Gastrocnemius medialis (tissue), 4 donors: ENCODE measurements at regions of chr17 and their contacts with region 1.

Region 1: GRCh38 chr17:42720996-42721583 is 23.8 kb downstream of the EZH1 start:
- DNase-seq: no peak
- ATAC-seq: peak; percentile 52 to 69
- H3K4me3 ChIP-seq: no peak overlapping the region
- H3K27ac ChIP-seq: no peak overlapping the region
- H3K4me1 ChIP-seq: no peaks in the 10 kb centered on the region
- H3K27me3 ChIP-seq: no peaks in the 10 kb centered on the region
- CTCF ChIP-seq: peak; percentile 48 to 67 (median 56)
- POLR2A ChIP-seq: no peak

Region 2: DNA sequence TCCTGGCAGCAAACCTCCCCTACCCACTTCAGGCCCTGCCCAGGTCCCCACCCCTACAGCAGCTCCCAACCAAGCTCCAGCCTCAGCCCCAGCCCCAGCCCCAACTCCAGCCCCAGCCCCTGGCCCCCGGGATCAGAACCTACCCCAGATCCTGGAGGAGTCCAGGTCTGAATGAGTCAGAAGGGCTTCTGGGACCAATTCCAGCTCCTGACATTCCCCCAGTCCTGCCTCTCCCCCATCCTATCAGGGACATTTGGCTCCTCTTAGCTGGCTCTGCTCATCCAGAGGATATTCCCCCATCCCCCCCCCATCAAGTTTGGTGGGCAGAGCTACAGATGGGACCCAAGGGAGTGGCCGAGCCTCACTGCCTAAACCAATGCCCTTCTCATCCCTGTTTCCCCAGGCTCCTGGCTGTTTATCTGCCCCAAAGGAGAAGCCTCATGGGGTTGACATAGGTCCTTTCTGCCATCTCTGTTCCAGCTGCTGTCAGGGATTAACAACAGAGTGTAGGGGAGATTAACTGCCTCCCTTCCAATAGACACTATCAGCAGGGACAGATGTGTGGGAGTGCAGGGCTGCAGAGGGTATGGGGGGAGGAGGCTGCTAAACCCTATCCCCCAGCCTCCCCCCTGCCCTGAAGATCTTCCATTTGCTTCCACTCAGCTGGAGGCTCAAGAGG is 22.2 kb before region 1 on chr17:
- in situ Hi-C with region 1: no loop called
- intact Hi-C with region 1: no loop called
- DNase-seq: no peak
- ATAC-seq: no peak
- H3K4me3 ChIP-seq: no peak overlapping the region
- H3K27ac ChIP-seq: no peak overlapping the region
- H3K4me1 ChIP-seq: no peaks in the 10 kb centered on the region
- H3K27me3 ChIP-seq: no peaks in the 10 kb centered on the region
- CTCF ChIP-seq: no peak
- POLR2A ChIP-seq: no peak

Region 3: DNA sequence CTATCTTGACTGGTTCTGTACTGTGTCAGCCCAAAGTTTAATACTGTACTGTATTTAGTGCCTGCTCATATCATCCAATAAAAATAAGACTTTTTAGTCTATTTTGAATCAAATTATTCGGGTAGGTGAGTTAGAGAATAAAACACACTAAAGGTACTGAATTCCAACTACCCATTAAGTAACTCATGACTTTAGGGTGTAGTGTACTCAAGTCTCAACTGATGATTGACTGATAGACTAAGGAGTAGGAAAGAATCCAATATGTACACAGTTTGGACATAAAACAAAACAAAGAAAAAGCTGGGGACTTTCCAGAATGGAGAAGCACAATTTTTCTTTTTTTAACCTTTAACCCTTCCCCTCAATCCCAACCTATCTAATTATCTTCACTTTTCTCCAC is 19.6 kb after region 1 on chr17:
- in situ Hi-C with region 1: no loop called
- intact Hi-C with region 1: no loop called
- DNase-seq: no peak
- ATAC-seq: no peak
- H3K4me3 ChIP-seq: no peak overlapping the region
- H3K27ac ChIP-seq: no peak overlapping the region
- H3K4me1 ChIP-seq: peaks cover 29 to 32% of the 10 kb centered on the region in 2 donors
- H3K27me3 ChIP-seq: no peaks in the 10 kb centered on the region
- CTCF ChIP-seq: no peak
- POLR2A ChIP-seq: no peak

Region 4: DNA sequence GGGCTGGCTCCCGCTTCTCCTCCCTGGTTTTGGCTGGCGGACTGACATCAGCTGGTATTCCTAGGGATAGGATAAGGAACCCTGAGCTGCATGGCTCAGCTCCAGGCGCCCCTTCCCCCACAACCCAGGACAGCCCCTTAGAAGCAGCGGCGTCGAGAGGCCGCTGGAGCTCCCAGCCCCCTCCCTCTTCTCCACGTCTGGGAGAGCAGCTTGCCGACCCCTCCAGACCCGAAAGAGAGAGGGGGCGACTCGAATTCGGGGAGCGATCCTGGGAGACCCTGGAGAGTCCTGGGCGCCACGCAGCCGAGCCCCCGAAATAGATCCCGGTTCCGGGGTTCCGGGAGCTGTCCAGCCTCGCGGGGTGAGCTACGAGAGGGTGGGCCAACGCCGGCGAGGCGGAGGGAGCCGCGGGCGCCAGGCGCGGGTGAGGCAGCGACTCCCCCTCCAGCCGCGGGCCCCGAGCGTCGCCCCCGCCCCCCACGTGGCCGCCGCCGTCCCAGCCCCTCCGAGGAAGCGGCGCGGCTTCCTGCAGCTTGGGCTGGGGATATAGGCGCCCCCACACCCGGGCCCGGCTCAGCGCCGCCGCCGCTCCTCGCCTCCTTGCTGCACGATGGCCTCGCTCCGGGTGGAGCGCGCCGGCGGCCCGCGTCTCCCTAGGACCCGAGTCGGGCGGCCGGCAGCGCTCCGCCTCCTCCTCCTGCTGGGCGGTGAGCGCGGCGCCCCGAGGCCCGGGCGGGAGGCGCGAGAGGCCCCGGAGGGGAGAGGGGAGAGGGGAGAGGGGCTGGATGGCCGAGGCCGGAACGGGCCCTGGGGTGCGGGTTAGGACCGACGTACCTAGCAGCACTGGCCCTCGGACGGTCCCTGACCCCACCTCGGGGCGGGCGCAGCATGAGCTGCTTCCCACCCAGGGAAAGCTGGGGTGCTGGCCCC is 39.8 kb after region 1 on chr17 and contains the start of gene RAMP2:
- in situ Hi-C with region 1: loop called in 2 of 4 experiments (anchors 5 kb)
- intact Hi-C with region 1: loop called (anchors 1 kb)
- DNase-seq: no peak
- ATAC-seq: peak in 1 of 2 donors; percentile 24
- H3K4me3 ChIP-seq: peak within 1 kb of the TSS; percentile 50 to 66 (median 58)
- H3K27ac ChIP-seq: peak within 1 kb of the TSS; percentile 67 to 78 (median 74)
- H3K4me1 ChIP-seq: peaks cover 3 to 13% of the 10 kb centered on the region in 2 donors
- H3K27me3 ChIP-seq: peaks cover 4 to 26% (median 15%) of the 10 kb centered on the region in 3 donors
- CTCF ChIP-seq: no peak
- POLR2A ChIP-seq: peak in 1 of 2 donors; percentile 41
- total RNA-seq, gene RAMP2: 17.5 to 31.2 (median 20.7) TPM

Region 5: GRCh38 chr17:42773290-42774035 is 52.4 kb after region 1 on chr17 and contains the start of gene VPS25:
- in situ Hi-C with region 1: no loop called
- intact Hi-C with region 1: no loop called
- DNase-seq: peak; percentile 62 to 74
- ATAC-seq: peak; percentile 96 to 99
- H3K4me3 ChIP-seq: peak within 1 kb of the TSS; percentile 85 to 100 (median 91)
- H3K27ac ChIP-seq: peak within 1 kb of the TSS; percentile 81 to 94 (median 88)
- H3K4me1 ChIP-seq: peaks cover 12 to 17% of the 10 kb centered on the region in 2 donors
- H3K27me3 ChIP-seq: no peaks in the 10 kb centered on the region
- CTCF ChIP-seq: peak in 1 of 5 experiments; percentile 24
- POLR2A ChIP-seq: peak in 1 of 2 donors; percentile 47
- total RNA-seq, gene VPS25: 44.8 to 54.6 (median 53.5) TPM

Region 6: DNA sequence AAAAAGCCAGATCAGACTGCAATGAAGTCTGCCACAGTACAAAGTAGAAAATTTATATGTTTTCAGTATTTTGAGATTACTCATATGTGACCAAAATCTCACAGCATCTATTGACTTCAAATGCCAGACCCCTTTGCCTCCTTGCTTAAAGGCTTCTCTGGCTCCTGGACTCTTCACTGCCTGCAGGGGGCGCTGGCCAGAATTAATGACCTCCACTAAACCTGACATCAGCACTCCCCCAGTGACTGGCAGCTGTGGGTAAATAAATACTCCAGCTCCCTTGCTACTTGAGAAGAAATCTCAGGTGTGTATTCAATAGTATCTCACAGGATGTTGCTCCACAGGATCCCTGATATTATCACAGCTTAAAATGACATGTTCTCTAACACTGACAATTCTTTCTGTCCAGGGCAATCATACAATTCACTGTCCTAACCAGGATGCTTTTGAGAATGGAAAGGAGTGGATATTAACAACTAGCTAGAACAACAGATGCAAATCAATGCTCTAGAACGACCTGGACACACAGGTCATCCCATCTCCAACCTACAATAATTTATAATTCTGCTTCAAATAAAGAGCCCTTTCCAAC is 99.0 kb after region 1 on chr17:
- in situ Hi-C with region 1: loop called in 1 of 4 experiments (anchors 10 kb)
- intact Hi-C with region 1: loop called (anchors 2 kb)
- DNase-seq: peak in 1 of 2 donors; percentile 33
- ATAC-seq: no peak
- H3K4me3 ChIP-seq: no peak overlapping the region
- H3K27ac ChIP-seq: no peak overlapping the region
- H3K4me1 ChIP-seq: peaks cover 13 to 14% of the 10 kb centered on the region in 2 donors
- H3K27me3 ChIP-seq: no peaks in the 10 kb centered on the region
- CTCF ChIP-seq: peak in 3 of 5 experiments; percentile 41 to 61 (median 42)
- POLR2A ChIP-seq: no peak

Region 7: GRCh38 chr17:42928714-42929496 is 207.8 kb after region 1 on chr17:
- in situ Hi-C with region 1: loop called in 1 of 4 experiments (anchors 25 kb)
- intact Hi-C with region 1: no loop called
- DNase-seq: peak; percentile 5 to 19
- ATAC-seq: peak; percentile 92 to 93
- H3K4me3 ChIP-seq: no peak overlapping the region
- H3K27ac ChIP-seq: peak overlapping the region; percentile 17 to 71 (median 52)
- H3K4me1 ChIP-seq: peaks cover 0 to 6% of the 10 kb centered on the region in 2 donors
- H3K27me3 ChIP-seq: peaks cover 0 to 4% (median 0%) of the 10 kb centered on the region in 3 donors
- CTCF ChIP-seq: peak in 4 of 5 experiments; percentile 46 to 62 (median 56)
- POLR2A ChIP-seq: no peak

Region 8: GRCh38 chr17:43175816-43176570 is 454.9 kb after region 1 on chr17:
- in situ Hi-C with region 1: loop called in 1 of 4 experiments (anchors 25 kb)
- intact Hi-C with region 1: no loop called
- DNase-seq: no peak
- ATAC-seq: no peak
- H3K4me3 ChIP-seq: no peak overlapping the region
- H3K27ac ChIP-seq: peak overlapping the region; percentile 3 to 25 (median 14)
- H3K4me1 ChIP-seq: peaks cover 42 to 47% of the 10 kb centered on the region in 2 donors
- H3K27me3 ChIP-seq: no peaks in the 10 kb centered on the region
- CTCF ChIP-seq: no peak
- POLR2A ChIP-seq: no peak